ENCODE measurements at regions of chr6 and their contacts with region 1.

Region 1: GRCh38 chr6:27553123-27553904 is 80.4 kb upstream of the ZNF184 start:
- DNase-seq: peak; percentile 89
- H3K4me3 ChIP-seq: peak overlapping the region; percentile 51
- H3K27ac ChIP-seq: peak overlapping the region; percentile 39
- H3K4me1 ChIP-seq: no peaks in the 10 kb centered on the region
- H3K27me3 ChIP-seq: no peaks in the 10 kb centered on the region
- CTCF ChIP-seq: no peak

Region 2: DNA sequence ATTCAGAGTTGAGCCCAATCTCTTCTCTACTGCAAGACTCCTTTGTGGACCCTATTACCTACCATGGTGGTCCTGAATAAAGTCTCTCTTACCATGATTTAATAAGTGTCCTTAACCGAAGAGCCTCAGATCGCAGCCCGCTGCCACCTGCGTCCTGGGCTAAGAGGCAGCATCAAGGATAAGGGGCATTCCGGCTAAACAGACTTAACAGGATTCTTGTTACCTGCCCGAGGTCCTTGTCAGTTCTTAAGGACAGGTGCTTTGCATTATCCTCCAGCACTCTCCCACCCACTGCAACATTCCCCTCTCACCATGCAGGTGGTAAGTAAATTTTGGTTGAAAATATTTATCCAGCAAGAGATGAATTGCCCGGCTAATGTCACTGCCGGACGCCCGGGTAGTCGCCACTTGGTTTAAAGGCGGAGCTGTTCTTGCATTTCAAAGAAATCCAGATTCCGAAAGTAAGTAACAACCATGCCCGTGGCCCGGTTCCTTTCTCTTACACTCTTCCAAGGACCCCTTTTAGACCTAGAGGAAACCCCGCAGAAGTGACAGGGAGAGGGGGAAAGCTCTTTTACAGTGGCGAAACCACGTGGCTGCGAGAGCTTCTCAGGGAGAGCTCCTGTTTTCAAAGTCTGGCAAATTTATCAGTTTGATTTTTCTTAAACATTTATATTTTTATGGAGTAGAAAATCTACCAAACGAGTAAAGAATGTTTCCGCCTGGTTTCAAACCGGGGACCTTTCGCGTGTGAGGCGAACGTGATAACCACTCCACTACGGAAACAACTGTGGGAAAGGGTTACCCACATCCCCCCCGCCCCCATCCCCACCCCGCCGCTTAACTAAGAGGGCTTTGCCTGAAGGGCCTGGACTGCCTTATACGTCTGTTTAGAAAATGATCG is 347.7 kb before region 1 on chr6:
- CTCF ChIA-PET with region 1: no interaction called
- POLR2A ChIA-PET with region 1: no interaction called
- intact Hi-C with region 1: no loop called
- DNase-seq: no peak
- H3K4me3 ChIP-seq: no peak overlapping the region
- H3K27ac ChIP-seq: no peak overlapping the region
- H3K4me1 ChIP-seq: no peaks in the 10 kb centered on the region
- H3K27me3 ChIP-seq: no peaks in the 10 kb centered on the region
- CTCF ChIP-seq: no peak

Region 3: GRCh38 chr6:27582928-27583725 is 29.8 kb after region 1 on chr6:
- CTCF ChIA-PET with region 1: no interaction called
- POLR2A ChIA-PET with region 1: no interaction called
- intact Hi-C with region 1: loop called (anchors 2 kb)
- DNase-seq: peak; percentile 82
- H3K4me3 ChIP-seq: peak overlapping the region; percentile 29
- H3K27ac ChIP-seq: no peak overlapping the region
- H3K4me1 ChIP-seq: no peaks in the 10 kb centered on the region
- H3K27me3 ChIP-seq: no peaks in the 10 kb centered on the region
- CTCF ChIP-seq: no peak